Activated CD4-positive, alpha-beta memory T cell treated with anti-CD3 and anti-CD28 coated beads for 36 hours (primary cell): ENCODE measurements at regions of chr14 and their contacts with region 1.

Region 1: DNA sequence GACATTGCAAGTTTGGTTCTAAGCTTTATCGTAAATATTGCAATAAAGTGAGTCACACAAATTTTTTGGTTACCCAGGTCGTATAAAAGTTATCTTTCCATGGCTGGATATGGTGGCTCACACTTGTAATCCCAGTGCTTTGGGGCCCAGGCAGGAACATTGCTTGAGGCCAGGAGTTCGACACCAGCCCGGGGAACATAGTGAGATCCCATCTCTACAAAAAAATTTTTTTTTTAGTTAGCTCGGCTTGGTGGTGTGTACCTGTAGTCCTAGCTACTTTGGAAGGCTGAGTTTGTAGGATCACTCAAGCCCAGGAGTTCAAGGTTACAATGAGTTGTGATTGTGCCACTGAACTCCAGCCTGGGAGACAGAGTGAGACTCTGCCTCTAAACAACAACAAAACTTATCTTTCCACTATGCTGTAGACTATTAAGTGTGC is 24.4 kb downstream of the PRORP start:
- DNase-seq: no peak
- H3K4me3 Mint-ChIP-seq: no peak overlapping the region
- H3K27ac Mint-ChIP-seq: no peak overlapping the region
- H3K4me1 Mint-ChIP-seq: peaks cover 16% of the 10 kb centered on the region
- H3K27me3 Mint-ChIP-seq: no peaks in the 10 kb centered on the region

Region 2: GRCh38 chr14:35134328-35135123 is 12.2 kb before region 1 on chr14:
- CTCF ChIA-PET with region 1: interaction called, 7 read pairs
- POLR2A ChIA-PET with region 1: interaction called, 4 read pairs
- intact Hi-C with region 1: loop called (anchors 1 kb)
- DNase-seq: no peak
- H3K4me3 Mint-ChIP-seq: no peak overlapping the region
- H3K27ac Mint-ChIP-seq: no peak overlapping the region
- H3K4me1 Mint-ChIP-seq: peaks cover 24% of the 10 kb centered on the region
- H3K27me3 Mint-ChIP-seq: no peaks in the 10 kb centered on the region

Region 3: GRCh38 chr14:35786856-35787255 is 640.1 kb after region 1 on chr14:
- CTCF ChIA-PET with region 1: no interaction called
- POLR2A ChIA-PET with region 1: no interaction called
- intact Hi-C with region 1: no loop called
- DNase-seq: no peak
- H3K4me3 Mint-ChIP-seq: no peak overlapping the region
- H3K27ac Mint-ChIP-seq: no peak overlapping the region
- H3K4me1 Mint-ChIP-seq: peaks cover 43% of the 10 kb centered on the region
- H3K27me3 Mint-ChIP-seq: no peaks in the 10 kb centered on the region